MCF 10A (cell line): ENCODE measurements at regions of chr1 and their contacts with region 1.

Region 1: GRCh38 chr1:168082008-168082876 is 54.5 kb downstream of the GPR161 start:
- DNase-seq: peak; percentile 88
- H3K4me3 Mint-ChIP-seq: no peak overlapping the region
- H3K27ac Mint-ChIP-seq: peak overlapping the region; percentile 82
- H3K4me1 Mint-ChIP-seq: peaks cover 28% of the 10 kb centered on the region
- H3K27me3 Mint-ChIP-seq: no peaks in the 10 kb centered on the region
- CTCF ChIP-seq: peak; percentile 95

Region 2: DNA sequence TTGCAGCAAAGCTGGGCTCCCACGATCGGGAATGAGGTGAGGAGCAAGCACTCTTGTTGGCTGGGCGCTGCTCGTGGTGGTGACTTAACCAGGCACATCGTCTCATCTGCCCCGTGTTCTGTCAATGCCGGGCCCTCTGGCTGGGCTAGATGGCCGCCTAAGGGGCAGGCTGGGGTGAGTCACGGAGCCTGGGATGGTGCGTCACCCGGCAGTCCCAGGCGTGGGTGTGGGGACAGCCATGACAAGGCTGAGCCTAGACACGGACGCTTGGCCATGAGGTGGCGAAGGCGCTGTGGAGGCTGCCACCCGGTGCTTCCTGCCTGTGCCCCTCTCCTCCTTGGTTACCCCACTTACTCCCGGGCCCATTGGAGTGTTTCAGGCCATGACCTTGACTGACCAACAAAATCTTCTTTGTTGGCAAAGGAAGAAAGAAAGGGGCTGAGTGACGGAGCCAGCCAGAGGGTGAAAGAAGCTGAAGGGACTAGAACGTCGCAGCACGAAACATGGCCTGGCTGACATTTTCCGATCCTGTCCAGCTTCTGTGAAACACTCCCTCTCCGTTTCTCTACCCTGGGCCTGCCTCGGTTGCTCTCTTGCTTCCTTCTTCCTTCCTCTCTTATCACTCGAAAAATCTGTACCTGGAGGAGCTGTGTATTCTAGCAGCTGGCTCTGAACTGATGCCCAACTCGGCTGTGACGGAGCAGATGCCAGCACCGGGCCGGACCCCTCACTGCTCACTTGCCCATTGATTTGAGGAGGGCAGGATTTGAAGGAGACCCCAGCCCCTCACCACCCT is 564.5 kb before region 1 on chr1:
- CTCF ChIA-PET with region 1: no interaction called
- POLR2A ChIA-PET with region 1: no interaction called
- intact Hi-C with region 1: no loop called
- DNase-seq: peak; percentile 88
- H3K4me3 Mint-ChIP-seq: no peak overlapping the region
- H3K27ac Mint-ChIP-seq: no peak overlapping the region
- H3K4me1 Mint-ChIP-seq: no peaks in the 10 kb centered on the region
- H3K27me3 Mint-ChIP-seq: no peaks in the 10 kb centered on the region
- CTCF ChIP-seq: no peak

Region 3: DNA sequence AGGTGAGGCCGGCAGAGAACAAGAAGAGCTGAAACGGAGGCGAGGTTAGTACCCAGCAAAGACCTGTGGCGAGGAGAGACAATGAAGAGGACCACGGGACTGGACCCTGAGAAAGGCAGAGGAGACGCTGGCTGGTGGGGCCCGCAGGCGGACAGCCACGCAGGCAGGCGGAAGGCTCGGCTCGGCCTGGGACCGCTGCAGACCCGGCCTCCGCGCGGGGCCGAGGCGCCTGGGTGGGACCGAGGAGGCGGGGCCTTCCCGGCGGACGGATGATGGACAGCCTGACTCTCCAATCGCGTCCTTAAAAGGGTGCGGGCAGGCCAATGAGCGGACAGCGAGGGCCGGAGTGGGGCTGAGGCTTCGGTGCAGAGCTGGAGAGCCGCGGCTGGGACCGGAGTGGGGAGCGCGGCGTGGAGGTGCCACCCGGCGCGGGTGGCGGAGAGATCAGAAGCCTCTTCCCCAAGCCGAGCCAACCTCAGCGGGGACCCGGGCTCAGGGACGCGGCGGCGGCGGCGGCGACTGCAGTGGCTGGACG is 360.6 kb before region 1 on chr1 and contains the start of gene MPZL1:
- CTCF ChIA-PET with region 1: interaction called, 13 read pairs
- POLR2A ChIA-PET with region 1: interaction called, 3 read pairs
- intact Hi-C with region 1: loop called (anchors 1 kb)
- DNase-seq: peak; percentile 95
- H3K4me3 Mint-ChIP-seq: peak within 1 kb of the TSS; percentile 84
- H3K27ac Mint-ChIP-seq: peak within 1 kb of the TSS; percentile 92
- H3K4me1 Mint-ChIP-seq: peaks cover 52% of the 10 kb centered on the region
- H3K27me3 Mint-ChIP-seq: no peaks in the 10 kb centered on the region
- CTCF ChIP-seq: no peak
- total RNA-seq, gene MPZL1: 164 and 169 TPM in 2 replicates

Region 4: DNA sequence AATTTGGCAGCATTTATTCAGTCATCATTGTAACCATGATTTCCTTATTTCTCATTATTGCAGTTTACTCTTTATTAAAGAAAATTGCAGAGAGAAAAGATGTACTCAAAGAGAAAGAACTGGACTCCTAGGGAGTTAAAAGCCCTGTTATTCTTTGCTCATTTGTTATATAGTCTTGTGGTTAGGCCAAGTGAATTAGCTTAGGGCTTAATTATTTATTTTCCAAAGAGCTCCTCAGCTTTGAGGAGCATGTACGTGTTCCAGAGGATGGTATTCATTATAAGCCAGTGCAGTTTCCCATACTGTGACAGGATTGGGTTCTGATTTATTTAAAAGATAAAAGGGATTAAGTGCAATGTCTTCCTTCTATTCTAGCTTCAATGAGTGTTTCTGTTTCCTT is 31.9 kb before region 1 on chr1:
- CTCF ChIA-PET with region 1: interaction called, 16 read pairs
- POLR2A ChIA-PET with region 1: interaction called, 3 read pairs
- intact Hi-C with region 1: no loop called
- DNase-seq: no peak
- H3K4me3 Mint-ChIP-seq: no peak overlapping the region
- H3K27ac Mint-ChIP-seq: no peak overlapping the region
- H3K4me1 Mint-ChIP-seq: no peaks in the 10 kb centered on the region
- H3K27me3 Mint-ChIP-seq: no peaks in the 10 kb centered on the region
- CTCF ChIP-seq: no peak

Region 5: DNA sequence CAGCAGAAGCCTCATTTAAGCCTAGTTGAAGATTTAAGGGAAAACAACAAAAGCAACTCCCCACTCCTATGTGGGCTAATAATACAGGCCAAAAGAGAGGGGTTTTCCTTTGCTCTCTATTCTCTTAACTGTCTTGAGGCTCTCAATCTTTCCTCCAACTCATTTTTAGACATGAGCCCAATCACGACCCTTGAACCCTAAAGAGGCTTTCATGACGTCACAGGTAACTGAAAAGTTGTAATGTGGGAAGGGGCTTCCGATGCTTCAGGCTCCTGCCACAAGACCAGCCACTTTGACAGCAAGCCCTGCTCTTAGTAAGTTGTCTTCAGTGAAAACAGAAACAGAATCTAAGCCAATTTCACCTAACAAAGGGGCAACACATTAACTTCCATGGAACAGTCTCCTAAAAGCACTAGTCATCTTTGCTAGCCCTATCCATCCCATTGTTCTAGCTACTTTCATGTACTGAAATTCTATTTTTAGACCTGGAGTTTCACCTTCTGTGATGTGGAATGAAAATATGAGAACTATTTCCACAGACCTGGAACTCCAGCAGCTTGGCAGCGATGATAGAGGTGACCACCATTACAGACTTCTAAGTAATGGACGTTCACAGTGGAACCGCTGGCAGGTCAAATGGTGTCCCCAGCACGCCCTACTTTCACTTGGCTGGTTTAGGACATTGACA is 18.2 kb after region 1 on chr1:
- CTCF ChIA-PET with region 1: interaction called, 116 read pairs
- POLR2A ChIA-PET with region 1: interaction called, 4 read pairs
- intact Hi-C with region 1: no loop called
- DNase-seq: no peak
- H3K4me3 Mint-ChIP-seq: no peak overlapping the region
- H3K27ac Mint-ChIP-seq: no peak overlapping the region
- H3K4me1 Mint-ChIP-seq: peaks cover 9% of the 10 kb centered on the region
- H3K27me3 Mint-ChIP-seq: no peaks in the 10 kb centered on the region
- CTCF ChIP-seq: no peak

Region 6: GRCh38 chr1:168129933-168130332 is 47.7 kb after region 1 on chr1:
- CTCF ChIA-PET with region 1: interaction called, 18 read pairs
- POLR2A ChIA-PET with region 1: no interaction called
- intact Hi-C with region 1: no loop called
- DNase-seq: no peak
- H3K4me3 Mint-ChIP-seq: no peak overlapping the region
- H3K27ac Mint-ChIP-seq: no peak overlapping the region
- H3K4me1 Mint-ChIP-seq: peaks cover 2% of the 10 kb centered on the region
- H3K27me3 Mint-ChIP-seq: no peaks in the 10 kb centered on the region
- CTCF ChIP-seq: no peak

Region 7: DNA sequence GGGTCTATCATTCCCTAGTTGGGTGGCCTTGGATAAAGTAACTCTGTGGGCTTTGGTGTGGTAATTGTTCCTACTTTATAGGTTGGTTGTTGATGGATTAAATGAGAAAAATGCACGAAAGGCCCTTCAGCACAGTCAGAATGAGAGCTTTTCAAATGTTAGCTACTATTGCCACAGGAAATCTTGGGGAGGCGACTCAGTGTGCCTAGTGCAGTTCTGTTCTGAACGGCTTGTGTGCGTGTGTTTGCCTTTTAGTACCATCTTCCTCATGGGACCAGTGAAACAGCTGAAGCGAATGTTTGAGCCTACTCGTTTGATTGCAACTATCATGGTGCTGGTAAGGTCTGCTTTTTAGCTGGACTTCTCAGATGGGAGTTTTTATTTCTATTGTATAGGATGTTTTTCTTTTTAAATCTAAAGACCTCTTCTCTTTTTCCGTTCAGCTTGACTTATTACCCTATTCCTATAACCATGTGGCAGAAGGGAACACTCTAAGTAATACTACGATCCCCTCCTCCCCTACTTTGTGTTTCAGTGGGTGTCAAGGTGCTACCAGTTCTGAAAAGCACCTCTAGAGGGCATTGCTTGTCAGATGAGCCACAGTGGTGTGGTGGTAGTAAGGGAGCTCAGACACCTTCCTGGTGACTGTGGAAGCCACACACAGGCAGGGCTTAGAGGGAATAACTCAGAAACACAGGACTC is 152.8 kb after region 1 on chr1:
- CTCF ChIA-PET with region 1: interaction called, 5 read pairs
- POLR2A ChIA-PET with region 1: no interaction called
- intact Hi-C with region 1: loop called (anchors 1 kb)
- DNase-seq: peak; percentile 84
- H3K4me3 Mint-ChIP-seq: no peak overlapping the region
- H3K27ac Mint-ChIP-seq: no peak overlapping the region
- H3K4me1 Mint-ChIP-seq: peaks cover 24% of the 10 kb centered on the region
- H3K27me3 Mint-ChIP-seq: no peaks in the 10 kb centered on the region
- CTCF ChIP-seq: peak; percentile 81

Region 8: GRCh38 chr1:169288011-169288414 is 1205.8 kb after region 1 on chr1:
- CTCF ChIA-PET with region 1: no interaction called
- POLR2A ChIA-PET with region 1: no interaction called
- intact Hi-C with region 1: no loop called
- DNase-seq: peak; percentile 18
- H3K4me3 Mint-ChIP-seq: no peak overlapping the region
- H3K27ac Mint-ChIP-seq: no peak overlapping the region
- H3K4me1 Mint-ChIP-seq: peaks cover 17% of the 10 kb centered on the region
- H3K27me3 Mint-ChIP-seq: no peaks in the 10 kb centered on the region
- CTCF ChIP-seq: no peak